Lower lobe of right lung (tissue), 2 donors: ENCODE measurements at regions of chr11 and their contacts with region 1.

Region 1: GRCh38 chr11:120248551-120249278 is 8.8 kb downstream of the POU2F3 start:
- DNase-seq: no peak
- ATAC-seq: no peak
- H3K4me3 ChIP-seq: no peak overlapping the region
- H3K27ac ChIP-seq: no peak overlapping the region
- H3K4me1 ChIP-seq: no peaks in the 10 kb centered on the region
- H3K27me3 ChIP-seq: peaks cover 43% of the 10 kb centered on the region
- CTCF ChIP-seq: no peak

Region 2: GRCh38 chr11:119919656-119920055 is 329.1 kb before region 1 on chr11:
- intact Hi-C with region 1: no loop called
- DNase-seq: no peak
- ATAC-seq: no peak
- H3K4me3 ChIP-seq: no peak overlapping the region
- H3K27ac ChIP-seq: no peak overlapping the region
- H3K4me1 ChIP-seq: no peaks in the 10 kb centered on the region
- H3K27me3 ChIP-seq: peaks cover 11% of the 10 kb centered on the region
- CTCF ChIP-seq: no peak

Region 3: GRCh38 chr11:120043328-120043945 is 205.3 kb before region 1 on chr11:
- intact Hi-C with region 1: no loop called
- DNase-seq: no peak
- ATAC-seq: no peak
- H3K4me3 ChIP-seq: no peak overlapping the region
- H3K27ac ChIP-seq: no peak overlapping the region
- H3K4me1 ChIP-seq: no peaks in the 10 kb centered on the region
- H3K27me3 ChIP-seq: peaks cover 9% of the 10 kb centered on the region
- CTCF ChIP-seq: no peak

Region 4: DNA sequence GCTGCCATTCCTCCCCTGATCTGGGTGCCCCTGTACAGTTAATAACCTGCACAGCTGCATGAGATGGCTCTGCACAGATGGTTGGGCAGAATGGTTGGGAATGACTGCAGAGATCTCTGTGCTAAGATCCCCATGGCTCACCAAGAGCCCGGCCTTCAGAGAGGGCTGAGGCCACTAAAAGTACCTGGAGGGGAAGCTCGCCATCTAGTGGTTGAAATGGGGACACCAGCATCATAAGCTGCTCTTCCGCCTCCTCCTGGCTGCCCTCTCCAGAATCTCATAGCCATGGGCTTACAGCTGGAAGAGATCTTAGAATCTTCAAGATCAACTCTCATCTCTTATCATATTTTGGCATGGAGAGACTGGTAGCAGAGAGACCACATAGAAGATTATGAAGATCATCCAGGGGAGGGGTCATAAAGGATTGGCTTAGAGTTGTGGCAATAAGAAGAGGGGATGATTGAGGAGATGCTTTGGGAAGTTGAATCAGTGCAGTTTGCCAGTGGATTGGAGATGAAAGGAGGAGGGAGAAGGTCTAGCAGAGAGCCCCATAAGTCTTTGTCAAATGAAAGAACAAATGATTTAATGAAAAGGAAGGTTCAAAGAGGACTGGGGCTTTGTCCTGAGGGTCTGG is 54.4 kb after region 1 on chr11:
- intact Hi-C with region 1: loop called (anchors 10 kb)
- DNase-seq: no peak
- ATAC-seq: peak; percentile 64 to 70
- H3K4me3 ChIP-seq: no peak overlapping the region
- H3K27ac ChIP-seq: peak overlapping the region; percentile 46
- H3K4me1 ChIP-seq: peaks cover 21% of the 10 kb centered on the region
- H3K27me3 ChIP-seq: peaks cover 6% of the 10 kb centered on the region
- CTCF ChIP-seq: peak; percentile 90